Lower lobe of right lung (tissue), 2 donors: ENCODE measurements at regions of chr4 and their contacts with region 1.

Region 1: DNA sequence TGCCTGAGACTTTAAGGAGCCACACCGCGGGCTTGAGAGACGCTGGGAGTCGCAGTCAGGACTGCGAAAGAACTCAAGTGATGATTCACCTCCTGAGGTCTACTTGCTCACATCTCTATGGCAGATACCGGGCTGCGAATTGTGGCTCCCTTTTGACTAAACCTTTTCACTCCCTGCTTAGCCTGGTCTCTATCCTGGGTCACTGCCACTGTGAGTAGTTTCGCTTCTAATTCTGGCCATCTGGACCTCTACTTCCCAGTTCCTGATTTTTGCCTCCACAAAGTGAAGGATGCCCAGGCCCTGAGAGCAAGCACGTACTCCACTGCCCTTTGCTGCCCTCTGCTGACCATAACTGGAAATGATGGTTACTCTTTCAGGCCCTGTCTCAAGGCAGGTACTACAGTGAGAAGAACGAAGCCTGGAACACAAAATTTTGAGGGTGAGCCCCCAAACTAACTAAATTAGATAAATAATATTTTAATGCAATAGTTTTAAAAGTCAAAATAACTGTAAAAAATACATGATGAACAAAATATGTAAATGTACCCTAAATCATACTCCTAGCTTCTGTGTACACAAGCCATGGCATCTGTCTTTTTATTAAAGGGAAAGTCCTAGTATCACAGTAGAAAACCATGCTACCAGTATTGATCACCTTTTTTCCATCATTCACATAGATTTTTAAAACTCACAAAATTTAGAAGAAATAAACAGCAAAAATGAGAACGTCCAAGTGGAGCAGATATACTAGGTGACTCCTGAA is 16.7 kb downstream of the MAD2L1 start:
- DNase-seq: peak; percentile 61
- ATAC-seq: peak; percentile 95 to 96
- H3K4me3 ChIP-seq: no peak overlapping the region
- H3K27ac ChIP-seq: no peak overlapping the region
- H3K4me1 ChIP-seq: peaks cover 16% of the 10 kb centered on the region
- H3K27me3 ChIP-seq: no peaks in the 10 kb centered on the region
- CTCF ChIP-seq: peak; percentile 81

Region 2: GRCh38 chr4:119314356-119314755 is 735.6 kb before region 1 on chr4:
- intact Hi-C with region 1: loop called (anchors 10 kb)
- DNase-seq: no peak
- ATAC-seq: peak; percentile 77 to 81
- H3K4me3 ChIP-seq: no peak overlapping the region
- H3K27ac ChIP-seq: no peak overlapping the region
- H3K4me1 ChIP-seq: no peaks in the 10 kb centered on the region
- H3K27me3 ChIP-seq: no peaks in the 10 kb centered on the region
- CTCF ChIP-seq: peak; percentile 50

Region 3: GRCh38 chr4:119564106-119564505 is 485.8 kb before region 1 on chr4:
- intact Hi-C with region 1: loop called (anchors 10 kb)
- DNase-seq: no peak
- ATAC-seq: no peak
- H3K4me3 ChIP-seq: no peak overlapping the region
- H3K27ac ChIP-seq: no peak overlapping the region
- H3K4me1 ChIP-seq: no peaks in the 10 kb centered on the region
- H3K27me3 ChIP-seq: no peaks in the 10 kb centered on the region
- CTCF ChIP-seq: no peak

Region 4: GRCh38 chr4:120105472-120105871 is 55.6 kb after region 1 on chr4:
- intact Hi-C with region 1: no loop called
- DNase-seq: no peak
- ATAC-seq: no peak
- H3K4me3 ChIP-seq: no peak overlapping the region
- H3K27ac ChIP-seq: no peak overlapping the region
- H3K4me1 ChIP-seq: no peaks in the 10 kb centered on the region
- H3K27me3 ChIP-seq: no peaks in the 10 kb centered on the region
- CTCF ChIP-seq: no peak